Activated naive CD4-positive, alpha-beta T cell treated with anti-CD3 and anti-CD28 coated beads for 36 hours (primary cell): ENCODE measurements at regions of chrX and their contacts with region 1.

Region 1: DNA sequence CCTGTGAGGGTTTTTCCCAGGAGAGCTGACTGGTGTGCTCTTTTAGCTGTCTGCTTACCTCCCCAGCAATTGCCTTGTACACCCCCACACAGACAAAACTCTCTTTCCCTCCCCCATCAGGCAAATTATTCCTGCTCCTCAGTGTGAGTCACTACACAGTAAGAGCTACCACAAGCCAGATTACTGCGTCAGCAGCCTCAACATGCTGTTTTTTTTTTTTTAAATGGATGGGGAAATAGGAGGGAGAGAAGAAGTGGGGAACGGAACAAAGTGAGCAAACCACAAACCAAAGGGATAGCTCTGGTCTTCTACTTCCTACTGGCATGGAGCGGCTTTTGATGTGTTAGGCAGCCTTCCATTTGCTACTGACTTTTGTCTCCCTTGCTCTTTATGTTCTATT is 107.5 kb upstream of the ACSL4 start:
- DNase-seq: peak; percentile 47
- H3K4me3 Mint-ChIP-seq: no peak overlapping the region
- H3K27ac Mint-ChIP-seq: no peak overlapping the region
- H3K4me1 Mint-ChIP-seq: peaks cover 17% of the 10 kb centered on the region
- H3K27me3 Mint-ChIP-seq: no peaks in the 10 kb centered on the region

Region 2: GRCh38 chrX:109270580-109271484 is 569.8 kb before region 1 on chrX:
- CTCF ChIA-PET with region 1: no interaction called
- intact Hi-C with region 1: loop called (anchors 5 kb)
- DNase-seq: peak; percentile 60
- H3K4me3 Mint-ChIP-seq: no peak overlapping the region
- H3K27ac Mint-ChIP-seq: peak overlapping the region; percentile 61
- H3K4me1 Mint-ChIP-seq: peaks cover 6% of the 10 kb centered on the region
- H3K27me3 Mint-ChIP-seq: no peaks in the 10 kb centered on the region

Region 3: GRCh38 chrX:109685656-109686078 is 154.9 kb before region 1 on chrX:
- CTCF ChIA-PET with region 1: no interaction called
- intact Hi-C with region 1: loop called (anchors 1 kb)
- DNase-seq: peak; percentile 55
- H3K4me3 Mint-ChIP-seq: no peak overlapping the region
- H3K27ac Mint-ChIP-seq: peak overlapping the region; percentile 89
- H3K4me1 Mint-ChIP-seq: peaks cover 33% of the 10 kb centered on the region
- H3K27me3 Mint-ChIP-seq: no peaks in the 10 kb centered on the region

Region 4: DNA sequence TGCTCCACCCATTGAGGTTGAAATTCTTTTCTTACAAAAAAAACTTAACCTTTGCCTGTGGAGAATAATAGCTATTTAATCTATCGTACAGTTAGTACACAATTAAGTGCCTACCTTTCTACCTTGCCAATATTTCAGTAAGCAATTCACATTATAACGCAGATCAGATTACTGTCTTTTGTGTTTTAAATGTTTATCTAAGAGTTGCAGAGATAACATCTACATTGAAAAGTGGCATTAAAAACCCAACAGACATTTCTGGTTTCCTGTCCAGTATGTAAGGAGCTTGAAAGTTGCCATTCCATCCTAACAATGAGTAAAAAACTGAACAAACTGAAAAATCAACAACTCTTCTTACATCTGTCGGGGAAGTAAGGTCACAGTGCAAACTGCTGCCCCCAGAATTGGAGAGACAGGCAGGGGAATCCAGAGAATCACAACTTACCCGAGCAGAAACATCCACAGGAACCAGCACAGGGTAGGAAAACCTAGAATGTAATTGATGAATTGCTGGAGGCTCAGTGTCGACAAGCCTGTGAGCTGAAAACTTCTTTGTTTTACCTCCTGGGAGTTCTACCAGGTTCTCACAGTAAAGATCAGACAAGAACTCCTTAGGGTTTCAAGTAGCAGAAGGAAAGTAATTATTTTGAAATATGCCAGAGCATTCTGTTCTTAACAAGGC is 80.2 kb before region 1 on chrX:
- CTCF ChIA-PET with region 1: no interaction called
- intact Hi-C with region 1: no loop called
- DNase-seq: no peak
- H3K4me3 Mint-ChIP-seq: no peak overlapping the region
- H3K27ac Mint-ChIP-seq: no peak overlapping the region
- H3K4me1 Mint-ChIP-seq: peaks cover 3% of the 10 kb centered on the region
- H3K27me3 Mint-ChIP-seq: peaks cover 2% of the 10 kb centered on the region

Region 5: DNA sequence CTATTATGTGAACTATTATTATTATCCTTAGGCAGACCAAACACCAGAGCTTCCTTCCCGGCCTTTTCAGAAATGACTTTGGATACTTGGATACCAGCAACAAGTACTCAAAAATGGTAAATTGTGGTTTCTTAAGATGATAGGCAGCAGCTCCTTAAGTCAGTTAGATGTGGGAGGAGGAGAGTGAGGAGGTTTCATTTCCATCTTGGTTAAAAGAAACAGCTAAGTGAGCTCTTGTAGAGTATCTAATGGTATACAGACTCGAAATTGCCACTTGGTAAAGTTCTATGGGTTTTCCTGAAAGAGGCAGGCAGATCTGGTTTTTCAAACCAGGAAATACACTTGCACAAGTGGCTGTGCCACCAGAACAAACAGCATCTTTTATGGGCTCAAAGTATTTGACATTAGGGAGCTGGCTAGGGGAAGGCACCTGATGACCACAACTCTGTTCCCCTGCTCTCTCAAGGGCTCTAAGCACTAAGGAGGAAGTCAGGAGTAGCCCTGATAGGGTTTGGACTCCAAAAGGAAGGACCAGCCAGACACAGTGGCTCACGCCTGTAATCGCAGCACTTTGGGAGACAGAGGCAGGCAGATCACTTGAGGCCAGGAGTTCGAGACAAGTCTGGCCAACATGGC is 293.3 kb after region 1 on chrX:
- CTCF ChIA-PET with region 1: no interaction called
- intact Hi-C with region 1: loop called (anchors 5 kb)
- DNase-seq: no peak
- H3K4me3 Mint-ChIP-seq: no peak overlapping the region
- H3K27ac Mint-ChIP-seq: no peak overlapping the region
- H3K4me1 Mint-ChIP-seq: peaks cover 18% of the 10 kb centered on the region
- H3K27me3 Mint-ChIP-seq: no peaks in the 10 kb centered on the region